Keratinocyte (primary cell): ENCODE measurements at regions of chr14 and their contacts with region 1.

Region 1: DNA sequence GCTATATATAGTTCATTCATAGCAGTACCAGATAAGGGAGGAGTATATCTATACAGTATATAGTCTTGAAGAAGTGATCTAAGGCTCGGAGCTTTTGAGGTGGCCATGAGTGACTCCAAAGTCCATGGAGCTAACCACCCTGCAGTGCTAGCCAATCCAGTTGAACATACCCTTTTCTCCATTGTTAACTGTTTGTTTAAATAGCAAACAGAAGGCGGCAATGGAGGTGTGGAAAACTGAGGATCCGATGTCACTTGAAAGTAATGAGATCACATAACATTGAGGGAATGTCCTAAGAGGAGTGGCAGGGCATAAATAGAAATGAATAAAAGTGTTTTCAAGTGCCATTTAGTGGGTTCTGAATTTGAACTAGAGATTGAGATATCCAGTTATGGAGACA is 12.4 kb upstream of the SNAPC1 start:
- DNase-seq: no peak
- H3K4me3 ChIP-seq: no peak overlapping the region
- H3K27ac ChIP-seq: no peak overlapping the region
- H3K4me1 ChIP-seq: peaks cover 29% of the 10 kb centered on the region
- H3K27me3 ChIP-seq: no peaks in the 10 kb centered on the region
- CTCF ChIP-seq: no peak

Region 2: GRCh38 chr14:61461808-61462275 is 288.0 kb before region 1 on chr14:
- dilution Hi-C with region 1: loop called (anchors 10 kb)
- DNase-seq: no peak
- H3K4me3 ChIP-seq: no peak overlapping the region
- H3K27ac ChIP-seq: peak overlapping the region; percentile 41
- H3K4me1 ChIP-seq: peaks cover 34% of the 10 kb centered on the region
- H3K27me3 ChIP-seq: no peaks in the 10 kb centered on the region
- CTCF ChIP-seq: peak; percentile 35 to 46 (median 37)

Region 3: DNA sequence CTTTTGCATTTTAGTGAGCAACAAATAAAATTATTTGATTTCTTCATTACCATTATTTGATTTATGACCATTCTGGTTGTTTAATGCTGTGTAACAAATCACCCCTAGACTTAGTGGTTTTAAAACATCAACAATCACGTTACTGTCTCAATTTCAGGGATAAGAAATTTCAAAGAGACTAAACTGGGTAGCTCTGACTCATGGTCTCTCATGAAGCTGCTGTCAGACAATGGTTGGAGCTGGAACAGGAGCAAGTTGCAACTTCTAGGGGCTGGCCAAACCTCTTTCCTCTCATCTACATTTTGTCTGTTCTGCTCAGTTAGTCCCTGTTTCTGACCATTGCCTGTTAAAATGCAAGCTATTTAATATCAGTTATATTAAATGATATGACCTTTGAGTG is 778.4 kb after region 1 on chr14:
- dilution Hi-C with region 1: no loop called
- DNase-seq: no peak
- H3K4me3 ChIP-seq: no peak overlapping the region
- H3K27ac ChIP-seq: no peak overlapping the region
- H3K4me1 ChIP-seq: no peaks in the 10 kb centered on the region
- H3K27me3 ChIP-seq: no peaks in the 10 kb centered on the region
- CTCF ChIP-seq: no peak